ENCODE measurements at regions of chr11 and their contacts with region 1.

Region 1: DNA sequence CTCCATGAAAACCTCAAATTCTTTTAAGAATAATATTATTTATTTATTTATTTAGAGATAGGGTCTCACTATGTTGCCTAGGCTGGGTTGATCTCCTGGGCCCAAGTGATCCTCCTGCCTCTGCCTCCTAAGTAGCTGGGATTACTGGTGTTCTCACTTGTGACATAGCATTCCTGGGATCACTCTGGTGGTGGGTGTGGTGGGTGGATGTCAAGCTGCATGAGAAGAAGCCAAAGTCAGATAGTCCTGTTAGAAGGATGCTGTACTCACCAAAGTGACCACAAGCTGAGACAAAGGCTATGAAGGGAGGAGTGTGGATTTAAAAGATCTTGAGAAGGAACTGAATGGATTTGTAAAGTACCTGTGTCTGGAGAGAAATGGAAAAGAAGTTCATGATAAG is 87.9 kb upstream of the SPON1 start:
- DNase-seq: peak in 3 of 4 experiments; percentile 36 to 58 (median 40)
- ATAC-seq: no peak
- H3K4me3 ChIP-seq: no peak overlapping the region
- H3K27ac ChIP-seq: peak overlapping the region; percentile 72; the same call in 1 of the 3 replicates
- H3K4me1 ChIP-seq: peaks cover 35 to 52% of the 10 kb centered on the region in 2 experiments; a peak in 4 of 5 replicates
- H3K27me3 ChIP-seq: no peaks in the 10 kb centered on the region
- CTCF ChIP-seq: no peak
- EP300 ChIP-seq: no peak
- POLR2A ChIP-seq: no peak
- RAD21 ChIP-seq: no peak

Region 2: GRCh38 chr11:13826505-13827278 is 47.9 kb before region 1 on chr11:
- CTCF ChIA-PET with region 1: no interaction called
- POLR2A ChIA-PET with region 1: no interaction called
- in situ Hi-C with region 1: no loop called
- intact Hi-C with region 1: no loop called
- DNase-seq: peak; percentile 13 to 67 (median 32)
- ATAC-seq: peak; percentile 64; the same call in 2 of the 3 replicates
- H3K4me3 ChIP-seq: no peak overlapping the region
- H3K27ac ChIP-seq: no peak overlapping the region
- H3K4me1 ChIP-seq: peaks cover 0 to 3% of the 10 kb centered on the region in 2 experiments; a peak in 2 of 5 replicates
- H3K27me3 ChIP-seq: no peaks in the 10 kb centered on the region
- CTCF ChIP-seq: no peak
- EP300 ChIP-seq: no peak; the same call in 1 of the 2 replicates
- POLR2A ChIP-seq: no peak
- RAD21 ChIP-seq: no peak

Region 3: GRCh38 chr11:13917264-13917663 is 42.7 kb after region 1 on chr11:
- CTCF ChIA-PET with region 1: no interaction called
- POLR2A ChIA-PET with region 1: no interaction called
- in situ Hi-C with region 1: no loop called
- intact Hi-C with region 1: no loop called
- DNase-seq: no peak
- ATAC-seq: no peak
- H3K4me3 ChIP-seq: no peak overlapping the region
- H3K27ac ChIP-seq: no peak overlapping the region
- H3K4me1 ChIP-seq: no peaks in the 10 kb centered on the region
- H3K27me3 ChIP-seq: no peaks in the 10 kb centered on the region
- CTCF ChIP-seq: no peak
- EP300 ChIP-seq: no peak
- POLR2A ChIP-seq: no peak
- RAD21 ChIP-seq: no peak

Region 4: DNA sequence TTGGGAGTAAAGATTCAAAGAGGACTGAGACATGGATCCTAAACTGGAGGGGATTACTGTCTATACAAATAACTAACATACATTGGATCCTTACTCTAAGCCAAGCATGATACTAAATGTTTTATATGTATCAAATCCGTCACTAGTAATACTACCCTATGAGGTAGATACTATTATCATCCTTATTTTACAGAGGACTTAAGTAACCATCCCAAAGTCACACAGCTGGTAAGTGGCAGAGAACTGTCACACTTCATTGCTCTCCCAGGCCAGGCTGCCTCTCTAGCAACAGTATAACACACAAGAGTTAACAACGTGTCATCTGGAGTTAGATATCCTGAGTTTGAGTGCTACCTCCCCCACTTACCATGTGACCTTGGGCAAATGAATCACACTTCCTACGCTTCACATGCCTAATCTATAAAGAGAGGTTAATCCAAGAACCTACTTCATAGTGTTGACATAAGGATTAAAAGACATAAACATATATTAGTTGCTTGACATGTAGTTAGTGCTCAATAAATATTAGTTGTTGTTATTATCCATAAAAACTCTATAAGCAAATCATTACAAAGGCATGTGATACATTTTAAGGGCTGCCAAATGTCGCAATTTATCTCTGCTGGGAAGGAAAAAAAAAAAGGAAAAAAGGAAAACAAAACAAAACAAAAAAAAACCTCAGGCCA is 54.1 kb after region 1 on chr11:
- CTCF ChIA-PET with region 1: no interaction called
- POLR2A ChIA-PET with region 1: no interaction called
- in situ Hi-C with region 1: no loop called
- intact Hi-C with region 1: loop called (anchors 5 kb)
- DNase-seq: peak in 3 of 4 experiments; percentile 10 to 73 (median 19)
- ATAC-seq: peak; percentile 72
- H3K4me3 ChIP-seq: no peak overlapping the region
- H3K27ac ChIP-seq: no peak overlapping the region
- H3K4me1 ChIP-seq: peaks cover 0 to 21% of the 10 kb centered on the region in 2 experiments; a peak in 3 of 5 replicates
- H3K27me3 ChIP-seq: no peaks in the 10 kb centered on the region
- CTCF ChIP-seq: no peak
- EP300 ChIP-seq: peak; percentile 35; the same call in 1 of the 2 replicates
- POLR2A ChIP-seq: no peak
- RAD21 ChIP-seq: no peak